Cardiac septum (tissue), 1 donor: ENCODE measurements at regions of chr12 and their contacts with region 1.

Region 1: GRCh38 chr12:50504798-50505385 is at the start of gene DIP2B:
- DNase-seq: peak; percentile 97
- total RNA-seq, gene DIP2B: 16.5 TPM

Region 2: GRCh38 chr12:50637870-50638481 is 133.1 kb after region 1 on chr12:
- intact Hi-C with region 1: loop called (anchors 1 kb)
- DNase-seq: no peak

Region 3: DNA sequence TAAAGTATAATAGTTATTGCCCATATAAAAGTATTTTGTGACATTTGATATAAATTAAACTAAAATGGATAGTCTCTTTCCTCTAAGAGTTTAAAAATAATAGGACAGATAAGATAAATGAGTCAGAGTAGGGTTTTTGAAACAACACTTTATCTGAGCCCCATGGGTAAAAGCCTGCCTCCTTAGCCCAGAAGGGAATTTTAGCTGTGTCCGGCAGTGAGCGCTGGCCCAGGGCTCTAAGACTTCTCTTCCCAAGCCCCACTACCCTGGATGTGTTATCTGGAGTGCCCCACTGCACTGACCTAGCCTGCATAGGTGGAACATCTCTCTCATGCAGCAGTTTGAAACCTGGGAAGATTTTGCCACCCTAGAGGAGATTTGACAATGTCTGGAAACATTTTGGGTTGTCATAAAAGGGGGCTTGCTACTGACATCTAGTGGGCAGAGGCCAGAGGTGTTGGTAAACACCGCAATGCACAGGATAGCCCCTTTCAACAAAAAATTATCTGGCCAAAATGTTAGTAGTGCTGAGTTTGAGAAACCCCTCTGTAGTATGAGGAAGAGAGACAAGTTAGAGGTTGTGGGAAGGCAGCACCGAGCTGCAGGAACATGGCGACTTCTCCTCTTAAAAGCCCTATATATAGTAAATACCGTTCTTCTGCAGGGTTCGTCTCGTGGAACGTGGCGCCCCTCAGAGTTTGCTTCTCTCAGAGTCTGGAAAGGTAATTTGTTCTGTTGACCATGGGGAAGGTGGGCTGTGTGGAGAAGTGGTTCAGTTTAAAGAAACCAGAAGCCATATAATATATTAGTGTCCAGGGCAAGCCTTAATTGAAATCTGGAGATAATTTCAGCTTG is 229.7 kb after region 1 on chr12:
- intact Hi-C with region 1: loop called (anchors 10 kb)
- DNase-seq: no peak